Activated T-helper 1 cell treated with anti-CD3 and anti-CD28 coated beads, Interleukin-12 subunit alpha, Interleukin-12 subunit beta, Interleukin-2, Interleukin-4 antibody, amounts not matched to agents 30 ng/mL and 10 ng/mL and 1 ng/mL, durations not matched to agents 14 hours and 24 hours and 36 hours (primary cell): ENCODE measurements at regions of chr2 and their contacts with region 1.

Region 1: GRCh38 chr2:43426305-43427031 is 169.4 kb downstream of the THADA start:
- DNase-seq: peak; percentile 75
- H3K4me3 Mint-ChIP-seq: peak overlapping the region; percentile 40
- H3K27ac Mint-ChIP-seq: peak overlapping the region; percentile 26
- H3K4me1 Mint-ChIP-seq: peaks cover 39% of the 10 kb centered on the region
- H3K27me3 Mint-ChIP-seq: peaks cover 2% of the 10 kb centered on the region

Region 2: DNA sequence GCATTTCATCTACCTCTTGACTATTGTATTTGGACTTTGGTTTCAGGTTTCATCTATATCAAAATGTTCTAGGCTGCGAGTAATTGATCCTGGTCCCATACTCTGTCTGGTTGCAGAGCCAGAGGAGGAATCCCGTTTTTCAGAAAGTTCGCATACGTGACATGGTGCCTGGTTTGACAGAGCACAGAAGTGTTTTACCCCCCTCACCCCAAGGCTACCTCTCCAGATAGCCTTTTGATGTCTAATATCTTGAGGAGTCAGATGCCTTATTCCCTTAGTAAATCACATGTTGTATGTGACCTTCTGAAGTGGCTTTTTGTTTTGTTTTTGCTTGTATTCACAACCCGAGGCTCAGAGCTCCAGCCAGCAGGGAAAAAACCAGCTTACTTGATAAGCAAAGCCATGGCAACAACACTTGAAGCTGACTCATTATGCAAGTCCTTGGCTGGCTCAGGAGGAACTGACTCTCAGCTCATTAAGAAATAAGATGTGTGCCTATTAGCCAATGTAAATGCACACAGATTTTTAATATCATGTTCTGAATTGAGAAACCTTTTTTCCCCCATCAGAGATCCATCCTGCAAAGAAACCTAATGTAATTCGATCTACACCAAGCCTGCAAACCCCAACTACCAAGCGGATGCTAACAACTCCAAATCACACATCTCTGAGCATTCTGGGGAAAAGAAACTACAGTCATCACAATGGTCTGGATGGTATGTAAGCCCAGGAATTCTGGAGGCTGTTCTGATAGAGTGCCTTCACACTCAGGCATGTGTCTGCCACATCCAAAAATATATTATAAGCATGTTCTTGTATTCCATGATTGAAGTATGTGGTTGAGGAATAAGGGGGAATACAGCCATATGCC is 703.9 kb before region 1 on chr2:
- intact Hi-C with region 1: loop called (anchors 10 kb)
- DNase-seq: peak; percentile 28
- H3K4me3 Mint-ChIP-seq: peak overlapping the region; percentile 11
- H3K27ac Mint-ChIP-seq: peak overlapping the region; percentile 45
- H3K4me1 Mint-ChIP-seq: peaks cover 13% of the 10 kb centered on the region
- H3K27me3 Mint-ChIP-seq: no peaks in the 10 kb centered on the region

Region 3: GRCh38 chr2:43219383-43220228 is 206.9 kb before region 1 on chr2:
- intact Hi-C with region 1: loop called (anchors 2 kb)
- DNase-seq: peak; percentile 78
- H3K4me3 Mint-ChIP-seq: peak overlapping the region; percentile 94
- H3K27ac Mint-ChIP-seq: peak overlapping the region; percentile 88
- H3K4me1 Mint-ChIP-seq: peaks cover 48% of the 10 kb centered on the region
- H3K27me3 Mint-ChIP-seq: no peaks in the 10 kb centered on the region

Region 4: GRCh38 chr2:43238176-43238575 is 188.3 kb before region 1 on chr2:
- intact Hi-C with region 1: no loop called
- DNase-seq: no peak
- H3K4me3 Mint-ChIP-seq: no peak overlapping the region
- H3K27ac Mint-ChIP-seq: no peak overlapping the region
- H3K4me1 Mint-ChIP-seq: peaks cover 8% of the 10 kb centered on the region
- H3K27me3 Mint-ChIP-seq: no peaks in the 10 kb centered on the region

Region 5: GRCh38 chr2:43387092-43388062 is 39.1 kb before region 1 on chr2:
- intact Hi-C with region 1: loop called (anchors 1 kb)
- DNase-seq: no peak
- H3K4me3 Mint-ChIP-seq: no peak overlapping the region
- H3K27ac Mint-ChIP-seq: peak overlapping the region; percentile 50
- H3K4me1 Mint-ChIP-seq: peaks cover 27% of the 10 kb centered on the region
- H3K27me3 Mint-ChIP-seq: no peaks in the 10 kb centered on the region

Region 6: GRCh38 chr2:43472527-43473194 is 46.2 kb after region 1 on chr2:
- intact Hi-C with region 1: no loop called
- DNase-seq: no peak
- H3K4me3 Mint-ChIP-seq: no peak overlapping the region
- H3K27ac Mint-ChIP-seq: no peak overlapping the region
- H3K4me1 Mint-ChIP-seq: no peaks in the 10 kb centered on the region
- H3K27me3 Mint-ChIP-seq: no peaks in the 10 kb centered on the region

Region 7: DNA sequence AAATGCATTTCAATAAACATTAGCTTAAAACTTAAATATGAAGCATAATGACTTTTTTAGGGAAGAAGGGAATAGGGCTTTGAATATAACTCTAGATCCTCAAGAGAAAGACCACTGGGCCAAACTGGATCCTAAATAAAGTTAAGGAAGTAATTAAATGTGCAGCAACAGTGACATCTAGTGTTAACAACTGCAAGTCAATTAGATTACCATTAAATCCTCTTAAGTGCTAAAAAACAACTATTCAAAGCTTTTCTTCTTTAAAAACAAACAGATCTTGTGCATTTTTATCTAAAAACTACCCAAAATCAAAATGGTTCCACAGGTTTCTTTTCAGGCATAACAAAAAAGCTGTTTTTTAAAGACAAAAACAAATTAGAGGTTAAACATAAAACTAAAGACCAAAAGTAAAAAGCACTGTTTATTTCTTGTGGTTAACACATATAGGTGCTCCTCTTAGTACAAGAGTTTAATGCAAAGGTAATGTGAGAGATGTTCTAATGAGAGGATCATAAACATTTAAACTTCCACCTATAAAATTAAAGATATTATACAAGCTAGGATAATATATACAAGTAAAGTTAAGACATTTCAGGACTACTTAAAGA is 58.0 kb after region 1 on chr2:
- intact Hi-C with region 1: loop called (anchors 2 kb)
- DNase-seq: no peak
- H3K4me3 Mint-ChIP-seq: no peak overlapping the region
- H3K27ac Mint-ChIP-seq: no peak overlapping the region
- H3K4me1 Mint-ChIP-seq: peaks cover 7% of the 10 kb centered on the region
- H3K27me3 Mint-ChIP-seq: no peaks in the 10 kb centered on the region

Region 8: GRCh38 chr2:43559391-43560230 is 133.1 kb after region 1 on chr2:
- intact Hi-C with region 1: loop called (anchors 1 kb)
- DNase-seq: no peak
- H3K4me3 Mint-ChIP-seq: peak overlapping the region; percentile 41
- H3K27ac Mint-ChIP-seq: peak overlapping the region; percentile 94
- H3K4me1 Mint-ChIP-seq: peaks cover 71% of the 10 kb centered on the region
- H3K27me3 Mint-ChIP-seq: no peaks in the 10 kb centered on the region